ENCODE measurements at regions of chr12 and their contacts with region 1.

Region 1: GRCh38 chr12:48851883-48852733 is at the start of gene DDX23:
- H3K4me3 Mint-ChIP-seq: peak within 1 kb of the TSS; percentile 96
- H3K27ac Mint-ChIP-seq: peak within 1 kb of the TSS; percentile 90
- H3K4me1 Mint-ChIP-seq: peaks cover 37% of the 10 kb centered on the region
- H3K27me3 Mint-ChIP-seq: no peaks in the 10 kb centered on the region

Region 2: GRCh38 chr12:47967461-47968321 is 884.4 kb before region 1 on chr12:
- intact Hi-C with region 1: no loop called
- H3K4me3 Mint-ChIP-seq: no peak overlapping the region
- H3K27ac Mint-ChIP-seq: no peak overlapping the region
- H3K4me1 Mint-ChIP-seq: peaks cover 28% of the 10 kb centered on the region
- H3K27me3 Mint-ChIP-seq: peaks cover 10% of the 10 kb centered on the region

Region 3: GRCh38 chr12:48795480-48796455 is 56.3 kb before region 1 on chr12:
- intact Hi-C with region 1: no loop called
- H3K4me3 Mint-ChIP-seq: no peak overlapping the region
- H3K27ac Mint-ChIP-seq: no peak overlapping the region
- H3K4me1 Mint-ChIP-seq: peaks cover 15% of the 10 kb centered on the region
- H3K27me3 Mint-ChIP-seq: peaks cover 8% of the 10 kb centered on the region

Region 4: DNA sequence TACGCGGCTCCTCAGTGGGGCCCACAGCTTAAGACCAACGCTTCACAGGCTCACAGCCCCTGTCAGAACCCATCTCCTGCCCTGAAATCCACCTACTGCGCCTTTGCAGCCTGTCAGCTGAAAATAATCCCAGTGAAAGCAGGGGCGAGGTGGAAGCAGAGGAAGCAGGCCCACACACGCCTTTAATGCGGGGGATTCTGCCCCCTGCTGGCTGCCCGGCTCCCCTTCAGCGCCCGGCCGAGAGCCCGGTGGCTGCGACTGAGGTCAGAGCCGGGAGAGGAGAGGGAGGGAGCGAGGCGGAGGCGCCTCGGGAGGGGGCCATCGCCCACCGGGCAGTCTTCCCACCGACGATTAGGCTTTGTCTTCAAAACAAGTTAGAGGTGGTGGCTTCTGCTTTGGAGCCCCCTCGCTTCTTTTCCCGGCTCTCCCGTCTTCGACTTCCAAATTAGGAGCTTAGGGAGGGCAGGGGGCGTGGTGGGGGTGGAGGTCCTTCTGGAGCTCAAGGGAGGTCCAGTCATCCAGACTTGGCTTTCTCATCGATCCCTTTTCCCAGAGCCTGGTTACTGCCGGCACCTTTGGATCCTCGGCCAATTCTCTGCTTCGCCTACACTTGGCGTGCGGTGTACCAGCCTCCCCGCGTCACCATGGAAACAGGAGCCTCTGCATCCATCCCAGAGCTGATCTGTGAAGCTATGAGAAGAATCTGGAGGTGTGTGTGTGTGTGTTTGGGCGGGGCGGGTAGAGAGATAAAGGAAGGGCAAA is 38.7 kb after region 1 on chr12:
- intact Hi-C with region 1: loop called (anchors 1 kb)
- H3K4me3 Mint-ChIP-seq: peak overlapping the region; percentile 11
- H3K27ac Mint-ChIP-seq: no peak overlapping the region
- H3K4me1 Mint-ChIP-seq: peaks cover 5% of the 10 kb centered on the region
- H3K27me3 Mint-ChIP-seq: peaks cover 36% of the 10 kb centered on the region

Region 5: GRCh38 chr12:48936379-48936979 is 84.4 kb after region 1 on chr12:
- intact Hi-C with region 1: loop called (anchors 1 kb)
- H3K4me3 Mint-ChIP-seq: no peak overlapping the region
- H3K27ac Mint-ChIP-seq: no peak overlapping the region
- H3K4me1 Mint-ChIP-seq: peaks cover 61% of the 10 kb centered on the region
- H3K27me3 Mint-ChIP-seq: no peaks in the 10 kb centered on the region

Region 6: GRCh38 chr12:48956279-48957140 is 104.4 kb after region 1 on chr12:
- intact Hi-C with region 1: loop called (anchors 1 kb)
- H3K4me3 Mint-ChIP-seq: peak overlapping the region; percentile 95
- H3K27ac Mint-ChIP-seq: peak overlapping the region; percentile 94
- H3K4me1 Mint-ChIP-seq: peaks cover 46% of the 10 kb centered on the region
- H3K27me3 Mint-ChIP-seq: peaks cover 7% of the 10 kb centered on the region

Region 7: DNA sequence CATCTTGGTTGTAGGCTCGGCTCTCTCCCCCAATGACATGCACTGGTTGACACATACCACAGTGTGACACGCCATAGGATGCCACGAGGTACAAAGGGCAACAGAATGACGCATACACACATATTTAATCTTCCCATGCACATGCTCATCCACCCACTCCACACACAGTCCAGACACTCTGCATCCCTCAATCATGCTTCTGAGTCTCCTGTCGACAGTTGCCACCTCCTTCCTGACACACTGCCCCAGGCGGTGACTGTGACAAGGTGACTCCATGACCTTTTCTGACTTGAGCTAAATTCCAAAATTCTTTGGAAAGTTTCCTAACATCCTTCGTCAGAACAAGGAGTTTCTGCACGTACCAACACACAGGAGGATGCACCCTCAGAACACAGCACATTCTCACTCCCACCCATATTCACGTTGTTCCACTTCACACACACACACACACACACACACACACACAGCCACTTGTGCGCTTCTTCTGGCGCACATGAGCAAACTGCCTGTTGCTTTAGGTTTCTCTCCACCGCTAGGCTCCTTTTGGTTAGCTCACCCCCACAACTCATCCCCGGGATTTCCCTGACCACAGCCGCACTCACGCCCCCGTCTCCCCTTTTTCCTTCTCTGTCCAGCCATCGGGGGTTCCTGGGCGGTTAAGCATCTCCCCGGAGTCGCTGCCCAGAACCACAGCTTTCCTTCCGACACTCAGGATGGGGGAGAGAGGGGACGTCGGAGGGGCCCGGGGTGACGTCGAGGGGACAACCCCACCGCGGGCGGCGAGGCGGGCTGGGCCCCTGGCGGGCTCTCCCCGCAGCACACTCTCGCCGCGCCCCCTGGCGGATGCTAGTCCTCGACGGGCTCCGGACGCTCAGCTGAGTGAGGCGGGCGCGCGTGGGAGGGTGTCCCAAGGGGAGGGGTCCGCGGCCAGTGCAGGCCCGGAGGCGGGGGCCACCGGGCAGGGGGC is 125.5 kb after region 1 on chr12:
- intact Hi-C with region 1: loop called (anchors 5 kb)
- H3K4me3 Mint-ChIP-seq: peak overlapping the region; percentile 64
- H3K27ac Mint-ChIP-seq: no peak overlapping the region
- H3K4me1 Mint-ChIP-seq: peaks cover 66% of the 10 kb centered on the region
- H3K27me3 Mint-ChIP-seq: peaks cover 97% of the 10 kb centered on the region

Region 8: DNA sequence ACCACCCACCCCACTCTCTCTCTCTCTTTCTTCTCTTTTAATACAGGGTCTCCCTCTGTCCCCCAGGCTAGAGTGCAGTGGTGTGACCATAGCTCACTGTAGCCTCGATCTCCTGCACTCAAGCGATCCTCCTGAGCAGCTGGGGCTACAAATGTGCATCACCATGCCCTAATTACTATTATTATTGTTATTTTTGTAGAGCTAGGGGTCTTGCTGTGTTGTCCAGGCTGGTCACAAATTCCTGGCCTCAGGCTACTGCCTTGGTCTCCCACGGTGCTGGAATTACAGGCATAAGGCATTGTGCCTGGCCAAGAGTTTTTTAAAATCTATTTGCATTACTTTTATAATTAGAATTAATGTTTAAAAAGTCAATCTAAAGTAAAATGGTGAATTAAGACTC is 302.1 kb after region 1 on chr12:
- intact Hi-C with region 1: no loop called
- H3K4me3 Mint-ChIP-seq: no peak overlapping the region
- H3K27ac Mint-ChIP-seq: no peak overlapping the region
- H3K4me1 Mint-ChIP-seq: no peaks in the 10 kb centered on the region
- H3K27me3 Mint-ChIP-seq: no peaks in the 10 kb centered on the region